Right ventricle myocardium inferior (tissue), 1 donor: ENCODE measurements at regions of chr17 and their contacts with region 1.

Region 1: DNA sequence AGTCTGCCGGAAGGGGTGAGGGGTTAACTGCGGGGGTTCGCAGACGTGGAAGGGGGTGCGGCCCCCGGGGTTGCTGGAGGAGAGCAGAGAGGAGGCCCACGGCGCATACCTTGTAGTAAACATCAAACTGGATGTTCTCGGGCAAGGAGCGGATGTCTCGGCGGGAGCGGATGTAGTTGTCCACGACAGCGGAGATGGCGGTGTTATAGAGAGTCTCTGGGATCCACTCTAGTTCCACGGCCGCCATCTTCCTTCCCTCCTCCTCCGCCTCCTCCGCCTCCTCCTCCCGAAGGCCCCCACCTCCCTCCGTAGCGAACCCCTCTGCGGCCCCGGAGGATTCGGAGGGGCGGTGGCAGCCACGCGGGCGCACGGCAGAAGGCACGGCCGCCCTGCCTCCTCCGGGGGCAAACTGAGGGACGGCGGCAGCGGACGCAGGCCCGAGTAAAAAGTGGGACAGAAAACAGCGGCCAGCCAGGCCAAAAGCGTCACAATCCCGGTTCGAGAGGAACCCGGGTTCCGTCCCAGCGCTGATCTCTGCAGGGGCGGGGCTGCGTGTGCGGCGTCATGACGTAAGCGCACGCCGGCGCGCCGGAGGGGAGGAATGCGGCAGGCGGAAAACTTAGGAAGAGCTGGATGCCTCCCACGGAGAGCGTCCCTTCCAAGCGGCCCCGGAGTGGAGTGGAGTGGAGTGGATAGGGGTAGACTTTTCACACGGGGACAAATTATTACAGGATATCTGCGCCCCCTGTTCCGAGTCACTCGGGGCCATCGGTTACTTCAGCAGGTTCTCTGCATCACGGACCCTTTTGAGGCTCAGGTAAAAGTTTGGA is at the start of gene APPBP2:
- DNase-seq: peak; percentile 94
- ATAC-seq: peak; percentile 98
- total RNA-seq, gene APPBP2: 16.7 TPM

Region 2: GRCh38 chr17:60568561-60568960 is 42.7 kb after region 1 on chr17:
- intact Hi-C with region 1: loop called (anchors 5 kb)
- DNase-seq: no peak
- ATAC-seq: no peak

Region 3: DNA sequence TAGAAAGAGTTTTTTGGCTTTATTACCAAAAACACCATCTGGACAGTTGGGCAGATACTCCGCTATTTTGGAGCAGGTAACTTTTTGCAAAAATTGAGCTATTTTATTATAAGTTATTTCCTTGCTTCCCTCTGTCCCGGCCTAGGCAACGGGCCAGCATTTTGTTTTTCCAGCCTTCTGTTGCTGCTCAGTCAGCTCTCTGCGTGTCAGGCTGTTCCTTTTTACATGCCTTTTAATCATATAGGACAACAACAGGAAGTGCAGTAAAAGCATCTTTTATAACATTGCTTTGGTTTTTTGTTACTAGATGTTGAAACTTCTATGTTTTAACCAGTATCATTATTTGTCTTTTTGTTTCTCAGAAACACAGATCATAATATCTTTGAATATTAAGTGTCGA is 104.5 kb after region 1 on chr17:
- intact Hi-C with region 1: loop called (anchors 10 kb)
- DNase-seq: no peak
- ATAC-seq: no peak